ENCODE measurements at regions of chr14 and their contacts with region 1.

Region 1: GRCh38 chr14:23057757-23058653 is 685 bp upstream of the CDH24 start:
- DNase-seq: peak; percentile 89 to 95 (median 90)
- ATAC-seq: peak; percentile 87
- H3K4me3 ChIP-seq: peak overlapping the region; percentile 62 to 67
- H3K27ac ChIP-seq: peak overlapping the region; percentile 58 to 69
- H3K4me1 ChIP-seq: peaks cover 11 to 37% of the 10 kb centered on the region in 2 donors
- H3K27me3 ChIP-seq: peaks cover 0 to 8% of the 10 kb centered on the region in 2 donors
- CTCF ChIP-seq: peak; percentile 89 to 95

Region 2: DNA sequence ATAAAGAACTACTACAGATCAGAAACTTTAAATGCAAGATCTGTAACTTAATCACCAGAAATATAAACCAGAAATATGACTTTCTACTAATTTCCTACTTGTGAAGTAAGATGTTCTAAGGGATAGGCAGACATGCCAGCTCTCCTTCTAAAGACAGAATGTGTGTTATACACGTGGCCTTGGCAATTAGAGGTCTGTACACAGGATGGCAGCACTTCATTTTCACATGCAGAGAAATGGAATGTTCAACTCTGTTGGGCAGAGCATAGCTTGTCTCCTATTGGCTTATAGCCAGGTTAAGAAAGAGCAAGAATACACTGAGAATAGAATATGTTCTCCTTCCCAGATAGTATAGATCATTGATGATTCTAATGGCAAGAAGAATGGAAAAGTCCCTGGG is 872.8 kb before region 1 on chr14:
- intact Hi-C with region 1: no loop called
- DNase-seq: no peak
- ATAC-seq: no peak
- H3K4me3 ChIP-seq: no peak overlapping the region
- H3K27ac ChIP-seq: no peak overlapping the region
- H3K4me1 ChIP-seq: no peaks in the 10 kb centered on the region
- H3K27me3 ChIP-seq: no peaks in the 10 kb centered on the region
- CTCF ChIP-seq: no peak

Region 3: GRCh38 chr14:22973217-22974032 is 84.6 kb before region 1 on chr14:
- intact Hi-C with region 1: no loop called
- DNase-seq: peak in 2 of 4 donors; percentile 41 to 65
- ATAC-seq: peak; percentile 47
- H3K4me3 ChIP-seq: no peak overlapping the region
- H3K27ac ChIP-seq: no peak overlapping the region
- H3K4me1 ChIP-seq: peaks cover 17% of the 10 kb centered on the region in 2 donors
- H3K27me3 ChIP-seq: no peaks in the 10 kb centered on the region
- CTCF ChIP-seq: peak; percentile 60 to 63

Region 4: DNA sequence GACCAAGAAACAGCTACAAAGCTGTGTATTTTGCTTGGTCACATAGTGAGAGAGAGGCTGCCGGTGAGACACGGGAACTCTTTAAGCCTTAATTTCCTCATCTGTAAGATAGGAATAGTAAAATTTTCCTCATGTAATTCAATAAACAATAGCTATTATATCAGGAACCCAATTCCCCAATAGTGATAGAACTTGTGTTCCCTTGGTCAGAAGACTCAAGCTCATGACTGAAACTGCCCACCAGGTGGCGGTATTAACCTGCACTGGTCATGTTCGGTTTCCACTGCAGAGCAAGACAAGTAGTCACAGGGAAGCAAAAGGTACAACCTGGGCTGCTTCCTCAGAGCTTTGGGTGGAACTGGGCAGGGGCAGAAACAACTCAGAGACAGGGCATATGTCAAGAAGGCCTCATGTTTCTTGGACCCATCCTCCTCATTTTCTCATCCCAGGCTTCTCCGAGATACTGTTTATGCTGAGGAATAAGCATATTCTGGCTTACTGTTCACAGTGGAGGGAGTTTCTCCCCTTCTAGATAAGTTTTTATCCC is 71.4 kb before region 1 on chr14:
- intact Hi-C with region 1: loop called (anchors 5 to 10 kb)
- DNase-seq: peak in 3 of 4 donors; percentile 83 to 92 (median 86)
- ATAC-seq: peak; percentile 57
- H3K4me3 ChIP-seq: no peak overlapping the region
- H3K27ac ChIP-seq: no peak overlapping the region
- H3K4me1 ChIP-seq: peaks cover 5 to 20% of the 10 kb centered on the region in 2 donors
- H3K27me3 ChIP-seq: peaks cover 3 to 15% of the 10 kb centered on the region in 2 donors
- CTCF ChIP-seq: peak; percentile 84 to 90

Region 5: DNA sequence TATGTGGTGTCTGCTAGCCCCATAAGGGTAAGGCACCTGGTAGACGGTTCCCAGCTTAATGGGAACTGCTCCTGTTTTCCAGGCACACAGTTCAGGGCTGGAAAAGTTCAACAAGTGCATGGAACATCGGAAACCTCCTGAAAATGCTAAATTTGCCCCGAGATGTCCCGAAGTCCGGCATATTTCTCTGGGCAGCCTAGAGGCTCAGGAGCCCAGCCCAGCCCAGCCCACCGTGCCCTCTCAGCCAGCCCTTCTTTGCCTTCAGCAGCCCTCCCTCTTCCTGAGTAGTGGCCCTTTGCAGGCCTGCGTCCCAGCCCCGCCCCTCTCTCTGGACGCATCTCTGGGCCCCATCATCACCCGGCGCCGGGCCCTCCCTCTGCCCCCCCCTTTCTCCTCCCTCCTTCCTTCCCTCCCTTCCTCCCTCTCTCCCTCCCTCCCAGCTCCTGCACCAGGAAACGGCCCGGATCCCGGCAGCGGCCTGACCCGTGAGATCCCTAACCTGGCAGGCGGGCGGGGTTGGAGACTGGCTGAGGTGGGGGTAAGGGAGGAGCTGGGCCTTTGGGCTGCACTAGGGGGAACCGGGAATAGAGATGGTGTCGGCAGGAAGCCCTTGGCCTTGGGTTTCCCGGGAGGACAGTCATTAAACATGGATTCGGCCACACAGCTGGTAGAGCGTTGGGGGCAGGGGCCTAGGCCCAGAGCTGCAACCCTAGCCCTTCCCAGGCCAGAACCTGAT is 248.6 kb after region 1 on chr14 and contains the start of gene BCL2L2:
- intact Hi-C with region 1: no loop called
- DNase-seq: peak; percentile 90 to 94 (median 92)
- ATAC-seq: peak; percentile 77
- H3K4me3 ChIP-seq: peak within 1 kb of the TSS; percentile 82 to 85
- H3K27ac ChIP-seq: peak within 1 kb of the TSS; percentile 78 to 84
- H3K4me1 ChIP-seq: peaks cover 25 to 41% of the 10 kb centered on the region in 2 donors
- H3K27me3 ChIP-seq: no peaks in the 10 kb centered on the region
- CTCF ChIP-seq: no peak
- polyA plus RNA-seq, gene BCL2L2: 39.2 to 41.5 (median 40.4) TPM

Region 6: GRCh38 chr14:23670481-23670880 is 612.5 kb after region 1 on chr14:
- intact Hi-C with region 1: no loop called
- DNase-seq: no peak
- ATAC-seq: no peak
- H3K4me3 ChIP-seq: no peak overlapping the region
- H3K27ac ChIP-seq: no peak overlapping the region
- H3K4me1 ChIP-seq: no peaks in the 10 kb centered on the region
- H3K27me3 ChIP-seq: no peaks in the 10 kb centered on the region
- CTCF ChIP-seq: no peak

Measured in left lung (tissue), 14 donors.